ENCODE measurements at regions of chr6 and their contacts with region 1.

Region 1: DNA sequence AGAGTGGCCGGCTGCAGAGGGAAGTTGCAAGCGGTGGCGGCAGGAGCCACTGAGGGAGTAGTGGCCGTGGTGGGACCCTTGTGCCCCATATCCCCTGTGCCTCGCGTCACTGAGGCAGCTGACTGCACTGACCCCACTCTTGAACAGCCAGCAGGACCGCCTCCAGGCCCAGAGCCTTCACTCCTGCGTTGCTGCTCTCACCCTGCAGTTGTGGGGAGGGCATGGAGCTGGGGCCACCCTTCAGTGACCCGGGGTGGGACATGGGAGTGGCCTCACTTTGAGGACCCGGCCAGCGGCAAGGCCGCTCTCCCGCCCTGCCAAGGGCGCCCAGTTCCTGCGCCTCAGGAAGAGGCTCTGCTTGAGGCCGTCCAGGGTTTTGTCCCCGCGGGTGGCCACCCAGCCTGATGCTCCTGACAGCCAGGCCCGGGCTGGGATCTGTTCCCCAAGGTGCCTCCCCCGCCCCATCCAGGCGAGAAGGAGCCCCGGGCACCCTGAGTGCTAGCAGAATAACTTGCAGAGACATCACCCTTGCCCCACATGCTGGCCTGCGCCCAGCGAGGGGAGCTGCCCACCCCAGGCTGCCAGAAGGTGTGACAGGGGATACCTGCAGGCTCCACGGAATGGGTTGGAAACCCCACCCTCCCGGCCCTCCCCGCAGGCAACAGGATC is 44.4 kb downstream of the HLA-DRA start:
- DNase-seq: no peak
- ATAC-seq: no peak
- H3K4me3 Mint-ChIP-seq: no peak overlapping the region
- H3K27ac Mint-ChIP-seq: no peak overlapping the region
- H3K4me1 Mint-ChIP-seq: no peaks in the 10 kb centered on the region
- H3K27me3 Mint-ChIP-seq: peaks cover 6% of the 10 kb centered on the region

Region 2: DNA sequence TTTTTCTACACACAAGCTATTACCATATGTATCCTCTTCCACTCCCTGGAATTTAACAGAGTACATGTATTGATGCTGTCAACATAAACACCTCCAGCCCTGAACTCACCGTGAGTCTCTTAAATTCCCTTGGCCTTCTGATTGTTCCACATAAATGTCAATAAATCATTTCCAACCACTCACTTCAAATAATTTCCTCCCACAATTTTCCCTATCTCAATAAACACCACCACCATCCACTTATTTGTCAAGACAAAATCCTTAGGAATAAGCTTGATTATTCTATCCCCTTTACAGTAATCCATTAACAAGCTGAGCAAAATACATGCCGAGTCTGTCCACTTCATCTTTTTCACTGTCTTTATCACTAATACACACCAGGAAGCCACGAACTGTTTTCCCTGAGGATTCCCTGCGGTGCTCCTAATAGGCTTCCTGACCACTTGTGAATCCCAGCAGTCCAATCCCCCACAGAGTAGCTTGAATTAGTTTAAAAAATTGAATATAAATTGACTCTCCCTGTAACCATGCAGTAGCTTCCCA is 86.3 kb after region 1 on chr6:
- CTCF ChIA-PET with region 1: no interaction called
- POLR2A ChIA-PET with region 1: no interaction called
- intact Hi-C with region 1: loop called in 1 of 2 experiments (anchors 1 kb)
- DNase-seq: no peak
- ATAC-seq: no peak
- H3K4me3 Mint-ChIP-seq: no peak overlapping the region
- H3K27ac Mint-ChIP-seq: no peak overlapping the region
- H3K4me1 Mint-ChIP-seq: peaks cover 7% of the 10 kb centered on the region
- H3K27me3 Mint-ChIP-seq: no peaks in the 10 kb centered on the region